Breast epithelium (tissue), 4 donors: ENCODE measurements at regions of chr12 and their contacts with region 1.

Region 1: DNA sequence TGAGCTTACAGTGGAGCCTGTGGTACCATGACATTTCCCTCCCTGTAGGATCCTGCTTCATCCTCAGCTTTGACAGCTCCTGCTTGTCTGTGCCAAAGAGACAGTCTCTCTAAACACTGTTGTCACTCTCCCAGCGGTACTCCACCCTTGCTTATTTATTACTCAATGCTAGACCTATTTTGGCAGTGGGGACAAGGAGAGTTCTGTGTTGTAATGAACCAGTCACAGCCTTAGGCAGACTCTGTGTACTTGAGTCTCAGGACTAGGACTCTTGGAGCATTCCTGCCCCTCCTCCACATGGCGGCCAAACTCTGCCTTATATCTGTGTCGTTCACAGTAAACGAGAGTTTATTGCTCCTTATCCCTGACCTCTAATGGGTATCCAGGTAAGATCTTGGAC is 70.9 kb downstream of the PIK3C2G start:
- DNase-seq: peak in 1 of 2 donors; percentile 47
- H3K4me3 ChIP-seq: no peak overlapping the region
- H3K27ac ChIP-seq: peak overlapping the region in 1 of 2 donors; percentile 71
- H3K4me1 ChIP-seq: no peaks in the 10 kb centered on the region
- H3K27me3 ChIP-seq: no peaks in the 10 kb centered on the region
- CTCF ChIP-seq: no peak
- POLR2A ChIP-seq: no peak

Region 2: DNA sequence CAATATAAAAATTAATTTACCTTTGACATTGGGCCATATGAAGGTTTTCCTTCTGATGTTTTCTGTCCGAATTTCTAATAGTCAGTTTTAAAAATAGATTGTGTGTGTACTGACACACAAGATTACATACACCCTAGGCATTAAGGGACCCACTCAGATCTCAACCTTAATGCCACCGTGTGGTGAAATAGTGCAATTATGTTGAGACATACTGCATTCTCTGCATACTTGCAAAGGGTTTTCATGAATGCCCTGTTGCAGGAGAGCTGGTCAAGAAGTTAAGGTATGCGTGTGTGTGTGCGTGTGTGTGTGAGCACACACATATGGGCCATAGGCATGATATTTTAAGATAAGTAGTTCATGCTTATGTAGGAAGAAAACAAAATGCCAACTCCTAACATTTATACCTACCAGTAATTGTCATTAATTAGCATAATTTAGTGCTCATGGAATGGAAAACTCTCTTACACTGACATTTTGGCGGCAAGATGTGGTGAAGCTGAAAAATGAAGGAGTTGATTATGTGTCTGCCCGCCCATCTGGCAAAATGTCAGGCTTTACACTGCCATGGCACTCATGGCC is 12.0 kb before region 1 on chr12:
- intact Hi-C with region 1: loop called (anchors 1 kb)
- DNase-seq: no peak
- H3K4me3 ChIP-seq: no peak overlapping the region
- H3K27ac ChIP-seq: no peak overlapping the region
- H3K4me1 ChIP-seq: no peaks in the 10 kb centered on the region
- H3K27me3 ChIP-seq: no peaks in the 10 kb centered on the region
- CTCF ChIP-seq: peak in 2 of 3 donors; percentile 52 to 67
- POLR2A ChIP-seq: no peak

Region 3: DNA sequence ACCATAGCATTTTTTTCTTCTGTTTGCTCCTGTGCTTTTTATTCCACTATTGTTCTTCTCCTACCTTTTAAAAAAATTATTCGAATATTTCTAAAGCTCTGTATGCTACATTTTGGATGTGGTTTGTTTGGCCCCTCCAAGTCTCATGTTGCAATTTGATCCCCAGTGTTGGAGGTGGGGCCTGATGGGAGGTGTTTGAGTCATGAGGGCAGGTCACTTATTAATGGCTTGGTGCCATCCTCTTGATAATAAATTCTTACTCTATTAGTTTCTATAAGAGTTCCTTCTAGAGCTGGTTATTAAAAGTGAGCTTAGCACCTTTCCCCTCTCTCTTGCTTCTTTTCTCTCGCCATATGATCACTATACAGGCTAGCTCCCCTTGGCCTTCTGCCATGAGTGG is 1590.5 kb after region 1 on chr12:
- intact Hi-C with region 1: no loop called
- DNase-seq: no peak
- H3K4me3 ChIP-seq: no peak overlapping the region
- H3K27ac ChIP-seq: no peak overlapping the region
- H3K4me1 ChIP-seq: no peaks in the 10 kb centered on the region
- H3K27me3 ChIP-seq: no peaks in the 10 kb centered on the region
- CTCF ChIP-seq: no peak
- POLR2A ChIP-seq: no peak